ENCODE measurements at regions of chr7 and their contacts with region 1.

Region 1: DNA sequence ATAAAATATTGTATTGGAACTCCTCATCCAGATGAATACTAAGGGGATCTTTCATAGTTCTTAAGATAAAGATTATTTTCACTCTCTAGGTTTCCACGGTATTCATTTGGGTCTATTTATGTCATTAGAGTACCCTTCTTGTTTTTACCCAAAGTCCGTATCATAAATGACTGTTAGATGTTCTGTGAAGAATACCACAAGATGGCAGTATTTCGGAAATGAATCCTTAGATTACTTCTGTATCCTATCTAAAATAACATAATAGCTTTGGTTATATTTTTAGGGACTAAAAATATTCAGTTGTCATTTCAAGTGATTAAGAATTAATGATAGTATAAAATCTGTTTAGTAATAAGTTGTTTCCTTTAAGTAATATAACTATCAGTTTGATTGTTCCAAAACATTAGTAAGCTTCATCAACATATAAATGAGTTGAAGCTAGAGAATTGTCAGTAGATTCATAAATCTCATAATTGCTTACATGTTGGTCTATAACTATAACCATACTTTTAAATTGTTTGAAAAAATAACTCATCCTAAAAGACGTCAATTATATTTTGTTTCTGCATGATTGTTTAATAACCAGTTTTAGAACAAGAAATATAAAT is 337.5 kb upstream of the KCND2 start:
- DNase-seq: no peak
- H3K4me3 ChIP-seq: no peak overlapping the region
- H3K27ac ChIP-seq: no peak overlapping the region
- H3K4me1 ChIP-seq: no peaks in the 10 kb centered on the region
- H3K27me3 ChIP-seq: no peaks in the 10 kb centered on the region
- CTCF ChIP-seq: peak in 2 of 4 experiments; percentile 23 to 39
- EP300 ChIP-seq: no peak
- POLR2A ChIP-seq: no peak

Region 2: GRCh38 chr7:120272261-120272660 is 336.7 kb after region 1 on chr7:
- intact Hi-C with region 1: loop called (anchors 5 kb)
- DNase-seq: no peak
- H3K4me3 ChIP-seq: peak overlapping the region; percentile 28 to 51 (median 46)
- H3K27ac ChIP-seq: no peak overlapping the region
- H3K4me1 ChIP-seq: peaks cover 0 to 12% (median 9%) of the 10 kb centered on the region in 4 donors
- H3K27me3 ChIP-seq: peaks cover 0 to 25% (median 0%) of the 10 kb centered on the region in 3 donors
- CTCF ChIP-seq: peak in 3 of 4 experiments; percentile 19 to 54 (median 47)
- EP300 ChIP-seq: no peak
- POLR2A ChIP-seq: no peak

Region 3: DNA sequence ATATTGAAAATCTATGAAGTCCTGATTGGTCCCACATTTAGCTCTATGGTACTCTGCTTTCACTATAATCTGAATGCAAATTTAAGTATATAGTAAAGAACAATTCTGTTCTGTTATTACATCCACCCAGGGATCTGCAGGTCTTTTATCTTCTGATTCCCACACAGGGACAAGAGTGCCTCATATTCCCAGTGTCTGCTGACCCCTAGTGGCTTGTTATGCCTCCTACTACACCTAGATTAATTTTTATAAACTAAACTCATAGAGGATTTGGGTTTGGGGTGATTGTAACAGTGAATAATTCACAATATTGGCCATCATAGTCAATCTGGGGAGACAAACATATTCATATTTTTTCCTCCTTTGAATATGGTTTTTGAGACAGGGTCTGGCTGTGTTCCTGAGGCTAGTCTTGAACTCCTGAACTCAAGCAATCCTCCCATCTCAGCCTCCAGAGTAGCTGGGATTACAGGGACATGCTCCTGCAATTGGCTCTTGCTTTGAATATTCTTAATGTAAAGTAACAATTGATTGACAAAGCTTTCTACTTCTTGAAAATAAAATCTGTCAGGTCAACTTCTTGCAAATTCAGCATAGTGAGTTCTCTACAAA is 619.5 kb after region 1 on chr7:
- intact Hi-C with region 1: loop called (anchors 10 kb)
- DNase-seq: no peak
- H3K4me3 ChIP-seq: no peak overlapping the region
- H3K27ac ChIP-seq: no peak overlapping the region
- H3K4me1 ChIP-seq: no peaks in the 10 kb centered on the region
- H3K27me3 ChIP-seq: no peaks in the 10 kb centered on the region
- CTCF ChIP-seq: peak in 3 of 4 experiments; percentile 20 to 63 (median 36)
- EP300 ChIP-seq: no peak
- POLR2A ChIP-seq: no peak

Measured in sigmoid colon (tissue), 7 donors.